Activated CD4-positive, alpha-beta memory T cell treated with anti-CD3 and anti-CD28 coated beads for 36 hours (primary cell): ENCODE measurements at regions of chr2 and their contacts with region 1.

Region 1: GRCh38 chr2:31413862-31414550 is 536 bp downstream of the XDH start:
- DNase-seq: peak; percentile 28
- H3K4me3 Mint-ChIP-seq: no peak overlapping the region
- H3K27ac Mint-ChIP-seq: no peak overlapping the region
- H3K4me1 Mint-ChIP-seq: peaks cover 21% of the 10 kb centered on the region
- H3K27me3 Mint-ChIP-seq: peaks cover 2% of the 10 kb centered on the region

Region 2: GRCh38 chr2:31429759-31430438 is 15.9 kb after region 1 on chr2:
- CTCF ChIA-PET with region 1: interaction called, 3 read pairs
- POLR2A ChIA-PET with region 1: no interaction called
- intact Hi-C with region 1: loop called (anchors 2 kb)
- DNase-seq: peak; percentile 76
- H3K4me3 Mint-ChIP-seq: no peak overlapping the region
- H3K27ac Mint-ChIP-seq: no peak overlapping the region
- H3K4me1 Mint-ChIP-seq: peaks cover 18% of the 10 kb centered on the region
- H3K27me3 Mint-ChIP-seq: peaks cover 25% of the 10 kb centered on the region

Region 3: GRCh38 chr2:31523871-31524492 is 110.0 kb after region 1 on chr2:
- CTCF ChIA-PET with region 1: interaction called, 8 read pairs
- POLR2A ChIA-PET with region 1: no interaction called
- intact Hi-C with region 1: loop called (anchors 2 kb)
- DNase-seq: peak; percentile 55
- H3K4me3 Mint-ChIP-seq: no peak overlapping the region
- H3K27ac Mint-ChIP-seq: no peak overlapping the region
- H3K4me1 Mint-ChIP-seq: no peaks in the 10 kb centered on the region
- H3K27me3 Mint-ChIP-seq: peaks cover 11% of the 10 kb centered on the region